ENCODE measurements at regions of chr11 and their contacts with region 1.

Region 1: DNA sequence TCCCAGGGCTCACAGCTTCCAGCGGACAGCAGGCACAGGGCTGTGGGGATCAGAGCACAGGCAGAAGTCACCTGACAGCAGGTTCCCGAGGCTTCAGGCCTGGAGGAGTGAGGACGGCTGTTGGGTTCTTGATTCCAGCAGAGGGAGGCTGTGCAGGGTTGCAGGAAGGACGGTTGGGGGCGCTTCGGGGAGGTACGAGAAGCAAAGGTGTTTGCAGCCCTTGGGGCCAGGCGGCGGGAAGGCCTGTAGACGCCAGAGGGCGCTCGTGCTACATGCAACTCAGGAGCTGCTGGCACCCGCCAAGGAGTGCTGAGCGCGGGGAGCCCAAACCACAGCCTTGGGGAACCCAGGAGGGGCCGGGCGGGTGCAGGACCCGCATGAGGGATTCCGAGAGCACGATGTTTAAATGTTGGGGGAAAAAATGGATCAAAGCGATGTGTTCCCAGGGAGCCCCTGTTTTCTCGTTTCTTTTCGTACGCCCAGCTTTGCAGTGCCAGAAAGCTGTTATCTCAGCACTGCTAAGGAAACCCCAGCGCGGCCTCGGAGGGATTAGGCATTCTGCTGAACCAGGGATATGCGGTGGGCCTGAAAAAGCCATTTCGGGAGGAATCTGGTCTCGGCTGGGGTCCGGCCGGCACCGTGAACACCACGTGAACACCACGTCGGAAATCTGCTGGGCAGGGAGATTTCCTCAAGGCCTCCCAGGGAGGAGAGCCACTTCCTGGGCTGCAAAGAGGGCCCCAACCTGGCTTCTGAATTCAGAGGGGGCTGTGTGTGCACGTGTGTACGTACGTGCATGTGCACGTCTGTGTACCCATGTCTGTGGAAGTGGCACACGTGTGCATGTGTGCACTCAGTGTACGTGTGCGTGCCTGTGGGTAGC is 88.1 kb downstream of the KCNQ1 start:
- DNase-seq: peak; percentile 87
- H3K4me3 ChIP-seq: no peak overlapping the region
- H3K27ac ChIP-seq: no peak overlapping the region
- H3K4me1 ChIP-seq: peaks cover 9% of the 10 kb centered on the region
- H3K27me3 ChIP-seq: no peaks in the 10 kb centered on the region
- CTCF ChIP-seq: peak; percentile 99
- POLR2A ChIP-seq: no peak

Region 2: DNA sequence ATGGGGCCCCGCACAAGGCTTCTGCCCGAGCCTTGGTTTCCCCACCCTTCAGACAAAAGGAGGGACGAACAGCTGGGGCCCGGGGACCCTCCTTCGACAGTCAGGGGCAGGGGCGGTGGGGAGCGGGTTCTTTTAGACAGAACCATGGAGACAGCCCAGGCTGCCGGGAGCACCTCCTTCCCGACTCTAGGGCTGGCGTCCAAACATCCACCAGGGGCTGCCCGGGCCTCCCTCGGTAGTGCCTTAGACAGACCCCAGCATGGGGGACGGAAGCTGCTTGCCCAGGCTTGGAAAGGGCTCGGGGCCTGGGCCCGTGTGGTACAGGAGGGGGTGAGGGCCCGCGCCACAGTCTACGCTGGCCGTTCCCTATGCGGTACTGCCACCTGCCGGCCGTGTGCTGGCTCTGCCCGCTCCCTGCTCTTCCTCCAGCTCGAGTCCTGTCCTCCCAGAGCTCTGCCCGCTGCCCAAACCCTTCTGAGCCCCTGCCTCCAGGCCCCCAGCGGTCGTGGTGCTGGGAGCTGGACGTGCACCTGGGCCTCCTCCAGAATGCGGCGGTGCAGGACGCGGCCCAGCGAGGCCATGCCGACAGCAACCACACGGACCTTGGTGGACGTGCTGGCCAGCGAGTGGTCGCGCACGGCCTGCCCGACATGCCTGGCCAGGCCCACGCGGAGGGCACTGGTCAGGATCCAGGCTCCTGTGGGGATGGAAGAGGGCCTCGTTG is 112.3 kb before region 1 on chr11:
- CTCF ChIA-PET with region 1: interaction called, 190 read pairs
- POLR2A ChIA-PET with region 1: no interaction called
- dilution Hi-C with region 1: no loop called
- intact Hi-C with region 1: no loop called
- DNase-seq: peak; percentile 59
- H3K4me3 ChIP-seq: no peak overlapping the region
- H3K27ac ChIP-seq: no peak overlapping the region
- H3K4me1 ChIP-seq: no peaks in the 10 kb centered on the region
- H3K27me3 ChIP-seq: no peaks in the 10 kb centered on the region
- CTCF ChIP-seq: peak; percentile 88 to 97
- POLR2A ChIP-seq: no peak

Region 3: GRCh38 chr11:2708151-2708581 is 175.2 kb after region 1 on chr11:
- CTCF ChIA-PET with region 1: no interaction called
- POLR2A ChIA-PET with region 1: no interaction called
- dilution Hi-C with region 1: no loop called
- intact Hi-C with region 1: no loop called
- DNase-seq: no peak
- H3K4me3 ChIP-seq: no peak overlapping the region
- H3K27ac ChIP-seq: no peak overlapping the region
- H3K4me1 ChIP-seq: no peaks in the 10 kb centered on the region
- H3K27me3 ChIP-seq: peaks cover 0 to 2% of the 10 kb centered on the region in 2 experiments
- CTCF ChIP-seq: no peak
- POLR2A ChIP-seq: no peak

Region 4: DNA sequence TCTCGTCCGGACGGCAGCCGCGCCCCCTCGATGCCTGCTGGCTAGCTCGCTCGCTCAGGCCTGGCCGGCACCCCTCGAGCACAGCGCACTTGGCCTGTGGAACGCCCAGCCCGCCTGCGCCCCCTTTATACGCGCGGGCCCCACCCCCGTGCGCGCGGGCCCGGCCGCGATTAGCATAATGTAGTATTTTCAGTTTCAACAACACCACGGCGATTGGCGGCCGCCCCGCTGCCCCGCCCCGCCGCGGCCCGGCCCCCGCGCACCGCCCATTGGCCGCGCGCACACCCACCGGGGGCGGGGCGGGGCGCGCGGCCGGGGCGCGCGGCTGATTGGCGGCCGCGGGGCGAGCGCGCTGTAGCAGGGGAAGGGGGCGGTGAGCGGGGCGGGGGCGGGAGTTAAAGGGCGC is 352.7 kb after region 1 on chr11 and contains the start of gene CDKN1C:
- CTCF ChIA-PET with region 1: interaction called, 711 read pairs
- POLR2A ChIA-PET with region 1: interaction called, 4 read pairs
- dilution Hi-C with region 1: no loop called
- intact Hi-C with region 1: loop called (anchors 1 kb)
- DNase-seq: peak; percentile 88
- H3K4me3 ChIP-seq: peak within 1 kb of the TSS in 2 of 3 experiments; percentile 12 to 44
- H3K27ac ChIP-seq: no peak within 1 kb of the TSS
- H3K4me1 ChIP-seq: peaks cover 8% of the 10 kb centered on the region
- H3K27me3 ChIP-seq: peaks cover 3 to 14% of the 10 kb centered on the region in 2 experiments
- CTCF ChIP-seq: no peak
- POLR2A ChIP-seq: no peak
- total RNA-seq, gene CDKN1C: 5.2 and 9.0 TPM in 2 replicates

Region 5: DNA sequence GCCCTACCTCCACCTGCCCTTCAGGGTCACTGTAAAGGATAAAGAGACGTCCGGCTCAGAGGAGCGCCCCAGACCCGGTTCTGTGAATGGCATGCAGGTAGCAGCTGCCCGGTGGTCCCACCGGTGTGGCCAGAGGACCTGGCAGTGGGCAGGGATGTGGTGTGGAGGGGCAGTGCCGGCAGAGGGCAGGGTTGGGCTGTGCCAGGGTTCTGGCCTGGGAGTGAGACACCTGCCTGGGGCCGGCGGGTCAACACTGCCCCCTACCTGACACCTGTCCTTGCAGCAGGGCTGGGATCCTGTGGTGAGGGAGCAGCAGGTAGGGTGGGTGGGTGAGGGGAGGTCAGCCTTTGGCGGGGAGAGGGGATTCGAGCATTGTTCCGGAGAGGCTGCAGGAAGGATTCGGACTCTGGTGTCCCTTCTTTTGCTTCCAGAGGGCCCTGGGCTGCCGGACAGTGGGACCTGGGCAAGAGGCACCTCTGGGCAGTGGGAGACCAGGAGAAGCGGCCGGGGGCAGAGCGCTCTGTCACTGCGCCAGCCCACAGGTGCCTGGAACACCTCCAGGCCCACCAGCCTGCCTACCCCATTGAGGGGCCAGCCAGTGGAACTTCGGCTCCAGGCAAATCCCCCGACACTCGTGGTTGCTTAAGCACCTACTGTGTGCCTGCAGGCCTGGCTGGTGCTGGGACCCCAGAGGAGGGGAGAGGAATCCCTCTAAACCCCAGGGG is 397.9 kb after region 1 on chr11:
- CTCF ChIA-PET with region 1: interaction called, 30 read pairs
- POLR2A ChIA-PET with region 1: interaction called, 9 read pairs
- dilution Hi-C with region 1: no loop called
- intact Hi-C with region 1: loop called (anchors 1 kb)
- DNase-seq: peak; percentile 68
- H3K4me3 ChIP-seq: peak overlapping the region in 2 of 3 experiments; percentile 21 to 37
- H3K27ac ChIP-seq: peak overlapping the region; percentile 78
- H3K4me1 ChIP-seq: peaks cover 26% of the 10 kb centered on the region
- H3K27me3 ChIP-seq: no peaks in the 10 kb centered on the region
- CTCF ChIP-seq: peak; percentile 39 to 82
- POLR2A ChIP-seq: no peak

Region 6: GRCh38 chr11:2992234-2992996 is 459.5 kb after region 1 on chr11 and contains the start of gene NAP1L4:
- CTCF ChIA-PET with region 1: interaction called, 8 read pairs
- POLR2A ChIA-PET with region 1: no interaction called
- dilution Hi-C with region 1: no loop called
- intact Hi-C with region 1: loop called (anchors 10 kb)
- DNase-seq: peak; percentile 97
- H3K4me3 ChIP-seq: peak within 1 kb of the TSS; percentile 64 to 97 (median 95)
- H3K27ac ChIP-seq: peak within 1 kb of the TSS; percentile 64
- H3K4me1 ChIP-seq: peaks cover 33% of the 10 kb centered on the region
- H3K27me3 ChIP-seq: no peaks in the 10 kb centered on the region
- CTCF ChIP-seq: no peak
- POLR2A ChIP-seq: peak; percentile 88
- total RNA-seq, gene NAP1L4: 173 and 177 TPM in 2 replicates